AG04450 (cell line): ENCODE measurements at regions of chr10 and their contacts with region 1.

Region 1: GRCh38 chr10:79454259-79454658 is 8.8 kb upstream of the ZCCHC24 start:
- DNase-seq: peak; percentile 62
- H3K4me3 ChIP-seq: no peak overlapping the region
- H3K27ac ChIP-seq: no peak overlapping the region
- H3K27me3 ChIP-seq: no peaks in the 10 kb centered on the region
- CTCF ChIP-seq: no peak

Region 2: GRCh38 chr10:79239275-79239779 is 214.9 kb before region 1 on chr10:
- CTCF ChIA-PET with region 1: no interaction called
- POLR2A ChIA-PET with region 1: no interaction called
- DNase-seq: no peak
- H3K4me3 ChIP-seq: no peak overlapping the region
- H3K27ac ChIP-seq: peak overlapping the region; percentile 47
- H3K27me3 ChIP-seq: no peaks in the 10 kb centered on the region
- CTCF ChIP-seq: no peak

Region 3: GRCh38 chr10:79299369-79300241 is 154.7 kb before region 1 on chr10:
- CTCF ChIA-PET with region 1: no interaction called
- POLR2A ChIA-PET with region 1: no interaction called
- DNase-seq: peak; percentile 41
- H3K4me3 ChIP-seq: no peak overlapping the region
- H3K27ac ChIP-seq: peak overlapping the region; percentile 98
- H3K27me3 ChIP-seq: no peaks in the 10 kb centered on the region
- CTCF ChIP-seq: no peak

Region 4: GRCh38 chr10:79434821-79435251 is 19.4 kb before region 1 on chr10:
- CTCF ChIA-PET with region 1: no interaction called
- POLR2A ChIA-PET with region 1: no interaction called
- DNase-seq: no peak
- H3K4me3 ChIP-seq: peak overlapping the region; percentile 31; the same call in 1 of the 2 replicates
- H3K27ac ChIP-seq: peak overlapping the region; percentile 97
- H3K27me3 ChIP-seq: no peaks in the 10 kb centered on the region
- CTCF ChIP-seq: no peak

Region 5: GRCh38 chr10:79468024-79468560 is 13.8 kb after region 1 on chr10:
- CTCF ChIA-PET with region 1: interaction called, 22 read pairs
- POLR2A ChIA-PET with region 1: no interaction called
- DNase-seq: no peak
- H3K4me3 ChIP-seq: no peak overlapping the region
- H3K27ac ChIP-seq: peak overlapping the region; percentile 49
- H3K27me3 ChIP-seq: no peaks in the 10 kb centered on the region
- CTCF ChIP-seq: no peak